GM13976 (cell line): ENCODE measurements at regions of chr17 and their contacts with region 1.

Region 1: DNA sequence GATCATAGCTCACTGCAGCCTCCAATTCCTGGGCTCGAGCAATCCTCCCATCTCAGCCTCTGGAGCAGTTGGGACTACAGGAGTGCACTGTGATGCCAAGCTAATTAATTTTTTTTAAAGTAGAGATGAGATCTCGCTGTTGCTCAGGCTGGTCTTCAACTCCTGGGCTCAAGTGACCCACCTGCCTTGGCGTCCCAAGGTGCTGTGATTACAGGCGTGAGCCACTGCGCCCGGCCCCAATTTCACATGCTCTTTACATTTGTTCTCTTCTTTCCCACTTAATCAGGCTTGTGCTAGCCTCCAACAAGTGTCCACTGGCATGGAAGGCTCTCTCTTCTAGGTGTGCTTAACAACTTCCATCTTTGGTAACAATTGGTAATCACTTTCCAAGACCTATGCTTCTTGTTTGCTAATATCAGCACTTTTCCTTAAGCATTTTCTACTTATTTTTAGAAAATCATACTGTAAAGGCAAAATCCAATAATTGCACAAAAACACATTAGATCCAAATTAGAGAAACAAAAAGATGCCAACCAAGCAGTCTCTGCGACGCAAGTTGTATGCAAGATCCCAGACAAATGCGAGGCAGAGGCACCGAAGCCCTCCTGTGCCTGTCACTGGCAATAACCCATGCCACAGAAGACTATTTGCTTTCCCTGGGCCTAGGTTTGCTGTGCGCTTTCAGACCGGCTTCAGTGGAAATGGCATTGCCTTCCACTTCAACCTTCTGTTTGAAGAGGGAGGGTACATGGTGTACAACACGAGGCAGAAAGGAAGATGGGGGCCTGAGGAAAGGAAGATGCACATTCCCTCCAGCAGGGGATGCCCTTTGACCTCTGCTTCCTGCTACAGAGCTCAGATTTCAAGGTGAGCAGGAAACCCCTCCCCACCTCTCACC is 52.6 kb downstream of the NOS2 start:
- DNase-seq: no peak
- CTCF ChIP-seq: no peak

Region 2: GRCh38 chr17:27654654-27655524 is 92.8 kb before region 1 on chr17:
- in situ Hi-C with region 1: loop called (anchors 10 kb)
- DNase-seq: peak; percentile 90
- CTCF ChIP-seq: peak; percentile 82